IMR-90 (cell line): ENCODE measurements at regions of chr3 and their contacts with region 1.

Region 1: DNA sequence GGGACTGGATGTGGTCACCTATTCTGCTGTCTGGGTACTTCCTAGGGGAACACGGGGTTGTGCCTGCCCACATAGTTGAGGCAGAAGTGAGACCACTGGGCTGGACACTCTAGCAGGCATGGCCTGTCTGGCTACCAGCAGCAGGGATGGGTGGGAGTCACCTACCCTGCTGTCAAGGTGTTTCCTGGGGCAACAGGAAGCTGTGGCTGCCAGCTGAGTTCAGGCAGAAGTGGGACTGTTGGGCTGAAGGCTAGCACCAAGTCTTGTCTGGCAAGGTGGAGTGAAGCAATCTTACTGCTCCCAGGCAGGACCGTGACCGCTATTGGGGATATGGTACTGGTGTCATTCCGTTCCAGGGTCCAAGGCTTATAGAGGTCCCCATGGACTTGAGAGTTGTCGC is 20.3 kb upstream of the ZDHHC23 start:
- DNase-seq: no peak
- ATAC-seq: no peak
- H3K4me3 ChIP-seq: no peak overlapping the region
- H3K27ac ChIP-seq: no peak overlapping the region
- H3K4me1 ChIP-seq: no peaks in the 10 kb centered on the region
- H3K27me3 ChIP-seq: no peaks in the 10 kb centered on the region
- CTCF ChIP-seq: no peak
- POLR2A ChIP-seq: no peak
- RAD21 ChIP-seq: no peak

Region 2: GRCh38 chr3:113968986-113969385 is 41.4 kb after region 1 on chr3:
- CTCF ChIA-PET with region 1: no interaction called
- POLR2A ChIA-PET with region 1: no interaction called
- dilution Hi-C with region 1: no loop called
- in situ Hi-C with region 1: no loop called
- intact Hi-C with region 1: loop called (anchors 1 kb)
- DNase-seq: no peak
- ATAC-seq: peak; percentile 49
- H3K4me3 ChIP-seq: no peak overlapping the region
- H3K27ac ChIP-seq: no peak overlapping the region
- H3K4me1 ChIP-seq: no peaks in the 10 kb centered on the region
- H3K27me3 ChIP-seq: no peaks in the 10 kb centered on the region
- CTCF ChIP-seq: no peak
- POLR2A ChIP-seq: no peak
- RAD21 ChIP-seq: no peak

Region 3: GRCh38 chr3:114727373-114727772 is 799.8 kb after region 1 on chr3:
- CTCF ChIA-PET with region 1: no interaction called
- POLR2A ChIA-PET with region 1: no interaction called
- dilution Hi-C with region 1: no loop called
- in situ Hi-C with region 1: no loop called
- intact Hi-C with region 1: no loop called
- DNase-seq: no peak
- ATAC-seq: no peak
- H3K4me3 ChIP-seq: no peak overlapping the region
- H3K27ac ChIP-seq: no peak overlapping the region
- H3K4me1 ChIP-seq: no peaks in the 10 kb centered on the region
- H3K27me3 ChIP-seq: no peaks in the 10 kb centered on the region
- CTCF ChIP-seq: no peak
- POLR2A ChIP-seq: no peak
- RAD21 ChIP-seq: no peak